Dorsolateral prefrontal cortex (tissue), 120 donors: ENCODE measurements at regions of chr3 and their contacts with region 1.

Region 1: GRCh38 chr3:65597226-65597951 is 441.3 kb downstream of the MAGI1 start:
- DNase-seq: peak; percentile 61 to 82 (median 75)
- H3K4me3 ChIP-seq: peak overlapping the region; percentile 47 to 83 (median 67)
- H3K27ac ChIP-seq: peak overlapping the region; percentile 36 to 94 (median 86)
- H3K27me3 ChIP-seq: no peaks in the 10 kb centered on the region
- CTCF ChIP-seq: peak in 2 of 56 donors; percentile 17 to 18

Region 2: GRCh38 chr3:65483480-65483879 is 113.9 kb before region 1 on chr3:
- intact Hi-C with region 1: loop called in 1 of 2 experiments (anchors 10 kb)
- DNase-seq: peak in 9 of 10 donors; percentile 57 to 80 (median 68)
- H3K4me3 ChIP-seq: peak overlapping the region in 3 of 59 donors; percentile 6 to 9 (median 6)
- H3K27ac ChIP-seq: peak overlapping the region in 3 of 59 donors; percentile 7 to 21 (median 13)
- H3K27me3 ChIP-seq: no peaks in the 10 kb centered on the region
- CTCF ChIP-seq: no peak

Region 3: GRCh38 chr3:65497846-65498245 is 99.5 kb before region 1 on chr3:
- intact Hi-C with region 1: loop called in 1 of 2 experiments (anchors 10 kb)
- DNase-seq: peak; percentile 26 to 94 (median 54)
- H3K4me3 ChIP-seq: peak overlapping the region in 41 of 59 donors; percentile 3 to 51 (median 35)
- H3K27ac ChIP-seq: peak overlapping the region in 6 of 59 donors; percentile 24 to 47 (median 36)
- H3K27me3 ChIP-seq: no peaks in the 10 kb centered on the region
- CTCF ChIP-seq: no peak

Region 4: GRCh38 chr3:65524584-65524983 is 72.8 kb before region 1 on chr3:
- intact Hi-C with region 1: no loop called
- DNase-seq: no peak
- H3K4me3 ChIP-seq: no peak overlapping the region
- H3K27ac ChIP-seq: no peak overlapping the region
- H3K27me3 ChIP-seq: no peaks in the 10 kb centered on the region
- CTCF ChIP-seq: no peak

Region 5: GRCh38 chr3:65672871-65673815 is 75.8 kb after region 1 on chr3:
- intact Hi-C with region 1: loop called (anchors 5 to 10 kb)
- DNase-seq: peak; percentile 46 to 76 (median 63)
- H3K4me3 ChIP-seq: no peak overlapping the region
- H3K27ac ChIP-seq: no peak overlapping the region
- H3K27me3 ChIP-seq: no peaks in the 10 kb centered on the region
- CTCF ChIP-seq: peak; percentile 76 to 98 (median 88)

Region 6: GRCh38 chr3:65732051-65732935 is 134.9 kb after region 1 on chr3:
- intact Hi-C with region 1: loop called in 1 of 2 experiments (anchors 10 kb)
- DNase-seq: peak in 1 of 10 donors; percentile 37
- H3K4me3 ChIP-seq: peak overlapping the region in 21 of 59 donors; percentile 3 to 47 (median 27)
- H3K27ac ChIP-seq: peak overlapping the region in 3 of 59 donors; percentile 12 to 57 (median 18)
- H3K27me3 ChIP-seq: no peaks in the 10 kb centered on the region
- CTCF ChIP-seq: peak; percentile 65 to 95 (median 86)

Region 7: DNA sequence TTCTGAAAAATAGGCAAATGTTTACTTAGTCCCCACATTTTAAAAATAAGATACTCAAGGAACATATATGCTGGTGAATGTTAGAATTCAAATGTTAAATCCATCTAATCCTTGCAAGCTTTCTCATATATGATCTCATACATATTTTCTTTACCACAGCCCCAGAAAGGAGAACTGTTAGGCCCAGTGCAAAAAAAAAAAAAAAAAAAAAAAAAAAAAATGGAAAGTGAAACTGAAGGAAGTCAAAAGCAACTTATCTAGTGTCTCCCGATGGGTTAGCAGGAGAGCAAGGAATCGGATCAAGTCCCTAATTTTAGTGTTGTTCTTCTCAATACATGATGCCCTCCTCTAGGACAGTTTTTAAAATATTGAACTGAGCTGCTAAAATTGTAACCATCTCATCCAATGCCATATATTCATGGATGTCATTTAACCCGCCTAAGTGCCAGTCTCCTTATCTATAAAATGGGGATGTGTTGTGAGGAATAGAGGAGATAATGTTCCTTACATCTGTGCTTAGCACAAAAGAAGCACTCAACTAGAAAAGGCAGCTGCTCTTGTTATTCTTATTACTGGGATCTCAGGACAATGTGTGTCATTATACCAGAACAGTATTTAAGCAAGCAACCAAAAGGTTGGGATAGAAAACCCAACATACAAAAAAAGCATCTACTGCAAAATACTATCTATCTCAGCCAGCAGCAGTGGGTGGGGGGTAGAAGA is 161.6 kb after region 1 on chr3:
- intact Hi-C with region 1: loop called in 1 of 2 experiments (anchors 5 kb)
- DNase-seq: no peak
- H3K4me3 ChIP-seq: peak overlapping the region in 40 of 59 donors; percentile 3 to 56 (median 26)
- H3K27ac ChIP-seq: peak overlapping the region in 58 of 59 donors; percentile 32 to 93 (median 84)
- H3K27me3 ChIP-seq: no peaks in the 10 kb centered on the region
- CTCF ChIP-seq: peak in 1 of 56 donors; percentile 13